Psoas muscle (tissue), 8 donors: ENCODE measurements at regions of chr1 and their contacts with region 1.

Region 1: GRCh38 chr1:160607011-160607671 is 27.8 kb upstream of the CD84 start:
- DNase-seq: no peak
- ATAC-seq: peak in 1 of 4 donors; percentile 40
- H3K4me3 ChIP-seq: no peak overlapping the region
- H3K27ac ChIP-seq: no peak overlapping the region
- H3K4me1 ChIP-seq: no peaks in the 10 kb centered on the region
- H3K27me3 ChIP-seq: peaks cover 0 to 4% (median 0%) of the 10 kb centered on the region in 3 donors
- CTCF ChIP-seq: peak; percentile 46

Region 2: DNA sequence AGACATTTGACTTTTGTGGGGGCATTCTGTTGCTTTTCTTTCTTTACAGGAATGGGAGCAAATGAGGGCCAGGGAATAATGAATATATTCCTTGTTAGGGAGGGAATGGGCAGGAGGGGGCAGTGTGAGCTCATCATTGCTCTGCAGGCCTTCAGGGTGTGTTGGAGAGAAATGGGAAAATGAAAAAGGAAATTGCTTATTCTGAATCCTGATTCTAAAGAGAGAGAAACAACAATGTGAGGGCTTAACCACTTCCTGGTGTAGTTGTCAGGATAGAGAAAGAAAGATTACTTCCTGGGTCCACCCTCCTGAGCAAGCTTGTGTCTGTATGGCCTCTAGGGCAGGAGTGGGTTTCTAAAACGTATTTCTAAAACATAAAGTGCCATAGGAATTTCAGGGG is 178.5 kb before region 1 on chr1:
- intact Hi-C with region 1: loop called (anchors 2 to 10 kb)
- DNase-seq: no peak
- ATAC-seq: no peak
- H3K4me3 ChIP-seq: no peak overlapping the region
- H3K27ac ChIP-seq: no peak overlapping the region
- H3K4me1 ChIP-seq: no peaks in the 10 kb centered on the region
- H3K27me3 ChIP-seq: no peaks in the 10 kb centered on the region
- CTCF ChIP-seq: peak; percentile 41